B cell (primary cell): ENCODE measurements at regions of chr7 and their contacts with region 1.

Region 1: DNA sequence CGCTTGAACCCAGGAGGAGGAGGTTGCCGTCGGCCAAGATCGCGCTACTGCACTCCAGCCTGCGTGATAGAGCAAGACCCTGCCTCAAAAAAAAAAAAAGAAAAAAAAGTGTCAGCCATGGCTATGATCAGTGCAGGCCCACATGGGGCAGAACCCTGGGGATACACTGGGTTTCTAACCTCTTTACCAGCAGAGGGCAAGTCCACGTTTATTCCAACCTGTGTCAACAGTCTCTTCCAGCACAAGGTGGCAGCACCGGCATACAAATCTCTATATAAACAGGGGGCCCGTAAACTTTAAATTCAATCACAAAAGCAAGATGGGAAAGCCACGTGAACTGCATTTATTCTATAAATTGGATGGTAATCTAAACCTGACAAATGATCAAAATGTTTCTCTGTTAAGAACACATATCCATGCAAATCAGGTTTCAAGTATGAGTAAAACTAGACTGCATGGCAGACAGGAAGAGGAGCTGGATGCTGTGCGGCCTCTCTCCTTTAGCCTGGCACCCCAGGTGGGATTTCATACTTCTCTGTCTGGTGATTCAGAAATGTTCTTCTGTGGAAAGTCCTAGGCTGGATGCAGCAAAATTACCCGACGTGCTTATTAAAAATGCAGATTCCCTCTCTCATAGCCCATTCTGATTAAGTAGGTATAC is 60.0 kb upstream of the STEAP1B start:
- DNase-seq: peak; percentile 88
- ATAC-seq: peak; percentile 90
- H3K4me3 ChIP-seq: no peak overlapping the region
- H3K4me3 Mint-ChIP-seq: peak overlapping the region; percentile 51
- H3K27ac ChIP-seq: no peak overlapping the region
- H3K27ac Mint-ChIP-seq: peak overlapping the region; percentile 26
- H3K4me1 ChIP-seq: peaks cover 39 to 47% of the 10 kb centered on the region in 2 donors
- H3K4me1 Mint-ChIP-seq: peaks cover 41% of the 10 kb centered on the region
- H3K27me3 ChIP-seq: no peaks in the 10 kb centered on the region
- H3K27me3 Mint-ChIP-seq: no peaks in the 10 kb centered on the region
- CTCF ChIP-seq: peak; percentile 95

Region 2: GRCh38 chr7:22433710-22434460 is 126.1 kb before region 1 on chr7:
- CTCF ChIA-PET with region 1: no interaction called
- POLR2A ChIA-PET with region 1: no interaction called
- intact Hi-C with region 1: no loop called
- DNase-seq: no peak
- ATAC-seq: no peak
- H3K4me3 ChIP-seq: no peak overlapping the region
- H3K4me3 Mint-ChIP-seq: no peak overlapping the region
- H3K27ac ChIP-seq: no peak overlapping the region
- H3K27ac Mint-ChIP-seq: peak overlapping the region; percentile 7
- H3K4me1 ChIP-seq: peaks cover 18% of the 10 kb centered on the region in 2 donors
- H3K4me1 Mint-ChIP-seq: peaks cover 27% of the 10 kb centered on the region
- H3K27me3 ChIP-seq: no peaks in the 10 kb centered on the region
- H3K27me3 Mint-ChIP-seq: no peaks in the 10 kb centered on the region
- CTCF ChIP-seq: no peak

Region 3: GRCh38 chr7:22549667-22550513 is 10.1 kb before region 1 on chr7:
- CTCF ChIA-PET with region 1: interaction called, 16 read pairs
- POLR2A ChIA-PET with region 1: no interaction called
- intact Hi-C with region 1: no loop called
- DNase-seq: peak; percentile 78
- ATAC-seq: peak; percentile 62
- H3K4me3 ChIP-seq: peak overlapping the region in 4 of 5 experiments; percentile 31 to 55 (median 50)
- H3K4me3 Mint-ChIP-seq: peak overlapping the region; percentile 96
- H3K27ac ChIP-seq: no peak overlapping the region
- H3K27ac Mint-ChIP-seq: no peak overlapping the region
- H3K4me1 ChIP-seq: peaks cover 29 to 32% of the 10 kb centered on the region in 2 donors
- H3K4me1 Mint-ChIP-seq: peaks cover 32% of the 10 kb centered on the region
- H3K27me3 ChIP-seq: peaks cover 0 to 14% (median 4%) of the 10 kb centered on the region in 4 experiments
- H3K27me3 Mint-ChIP-seq: peaks cover 14% of the 10 kb centered on the region
- CTCF ChIP-seq: peak; percentile 68

Region 4: GRCh38 chr7:22610951-22611757 is 51.2 kb after region 1 on chr7:
- CTCF ChIA-PET with region 1: interaction called, 3 read pairs
- POLR2A ChIA-PET with region 1: no interaction called
- intact Hi-C with region 1: loop called (anchors 10 kb)
- DNase-seq: no peak
- ATAC-seq: no peak
- H3K4me3 ChIP-seq: no peak overlapping the region
- H3K4me3 Mint-ChIP-seq: no peak overlapping the region
- H3K27ac ChIP-seq: no peak overlapping the region
- H3K27ac Mint-ChIP-seq: no peak overlapping the region
- H3K4me1 ChIP-seq: peaks cover 0 to 6% of the 10 kb centered on the region in 2 donors
- H3K4me1 Mint-ChIP-seq: peaks cover 8% of the 10 kb centered on the region
- H3K27me3 ChIP-seq: no peaks in the 10 kb centered on the region
- H3K27me3 Mint-ChIP-seq: no peaks in the 10 kb centered on the region
- CTCF ChIP-seq: no peak

Region 5: GRCh38 chr7:22726345-22727185 is 166.6 kb after region 1 on chr7:
- CTCF ChIA-PET with region 1: interaction called, 712 read pairs
- POLR2A ChIA-PET with region 1: interaction called, 15 read pairs
- intact Hi-C with region 1: loop called (anchors 1 kb)
- DNase-seq: peak; percentile 84
- ATAC-seq: peak; percentile 73
- H3K4me3 ChIP-seq: peak overlapping the region in 4 of 5 experiments; percentile 58 to 70 (median 66)
- H3K4me3 Mint-ChIP-seq: peak overlapping the region; percentile 80
- H3K27ac ChIP-seq: peak overlapping the region; percentile 90 to 94
- H3K27ac Mint-ChIP-seq: peak overlapping the region; percentile 90
- H3K4me1 ChIP-seq: peaks cover 77 to 79% of the 10 kb centered on the region in 2 donors
- H3K4me1 Mint-ChIP-seq: peaks cover 80% of the 10 kb centered on the region
- H3K27me3 ChIP-seq: no peaks in the 10 kb centered on the region
- H3K27me3 Mint-ChIP-seq: no peaks in the 10 kb centered on the region
- CTCF ChIP-seq: peak; percentile 78

Region 6: DNA sequence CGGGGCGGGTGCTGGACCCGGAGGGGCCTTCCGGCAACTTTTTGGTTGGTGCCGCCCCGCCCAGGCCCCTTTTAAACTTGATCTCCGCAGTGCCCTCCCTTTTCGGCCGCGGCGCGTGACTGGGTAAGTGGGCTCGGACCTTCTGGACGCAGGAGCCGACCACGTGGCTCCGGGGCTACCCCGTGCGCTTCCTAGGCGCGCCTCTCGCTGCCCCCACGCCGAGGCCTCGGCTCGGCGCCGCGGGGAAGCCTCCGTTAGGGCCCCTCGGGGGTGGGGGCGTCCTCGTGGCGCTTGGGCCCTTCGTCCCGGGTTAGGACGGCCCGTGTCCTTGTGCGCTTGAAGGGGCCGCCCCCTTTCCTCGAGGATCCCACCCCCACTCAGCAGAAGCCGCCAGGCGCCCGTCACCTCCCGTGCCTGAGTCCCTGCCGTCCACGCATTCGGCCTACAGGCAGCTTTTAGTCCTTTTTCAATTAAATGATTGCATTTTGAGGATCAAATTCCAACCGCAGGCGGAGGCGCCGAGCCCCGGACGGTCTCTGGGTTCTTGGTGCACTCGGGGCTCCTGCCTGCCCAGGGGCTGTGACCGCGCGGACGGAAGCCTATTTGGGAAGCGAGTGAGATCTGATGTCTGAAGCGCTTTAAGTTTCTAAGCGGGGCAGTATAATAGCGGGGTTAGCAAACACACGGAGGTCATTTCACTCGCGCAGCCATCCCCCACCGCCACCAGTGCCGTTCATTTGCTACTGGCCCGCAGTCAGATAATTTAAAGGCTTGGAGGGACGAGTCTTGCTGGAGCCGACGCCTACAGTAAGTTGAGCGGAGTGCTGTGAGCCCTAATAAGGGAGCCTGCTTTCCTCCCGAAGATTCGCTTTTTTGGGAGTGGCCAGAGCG is 294.4 kb after region 1 on chr7:
- CTCF ChIA-PET with region 1: interaction called, 5 read pairs
- POLR2A ChIA-PET with region 1: no interaction called
- intact Hi-C with region 1: loop called (anchors 5 kb)
- DNase-seq: peak; percentile 88
- ATAC-seq: peak; percentile 83
- H3K4me3 ChIP-seq: peak overlapping the region; percentile 74 to 87 (median 80)
- H3K4me3 Mint-ChIP-seq: peak overlapping the region; percentile 97
- H3K27ac ChIP-seq: peak overlapping the region; percentile 71 to 87
- H3K27ac Mint-ChIP-seq: peak overlapping the region; percentile 94
- H3K4me1 ChIP-seq: peaks cover 17 to 27% of the 10 kb centered on the region in 2 donors
- H3K4me1 Mint-ChIP-seq: peaks cover 38% of the 10 kb centered on the region
- H3K27me3 ChIP-seq: no peaks in the 10 kb centered on the region
- H3K27me3 Mint-ChIP-seq: no peaks in the 10 kb centered on the region
- CTCF ChIP-seq: peak; percentile 84

Region 7: GRCh38 chr7:23181684-23182553 is 622.0 kb after region 1 on chr7 and contains the start of gene NUP42:
- CTCF ChIA-PET with region 1: interaction called, 3 read pairs
- POLR2A ChIA-PET with region 1: no interaction called
- intact Hi-C with region 1: loop called (anchors 5 kb)
- DNase-seq: peak; percentile 98
- ATAC-seq: peak; percentile 89
- H3K4me3 ChIP-seq: peak within 1 kb of the TSS; percentile 77 to 99 (median 87)
- H3K4me3 Mint-ChIP-seq: peak within 1 kb of the TSS; percentile 96
- H3K27ac ChIP-seq: peak within 1 kb of the TSS; percentile 92 to 98
- H3K27ac Mint-ChIP-seq: peak within 1 kb of the TSS; percentile 98
- H3K4me1 ChIP-seq: peaks cover 17 to 20% of the 10 kb centered on the region in 2 donors
- H3K4me1 Mint-ChIP-seq: peaks cover 37% of the 10 kb centered on the region
- H3K27me3 ChIP-seq: no peaks in the 10 kb centered on the region
- H3K27me3 Mint-ChIP-seq: no peaks in the 10 kb centered on the region
- CTCF ChIP-seq: no peak
- total RNA-seq, gene NUP42: 49.2 and 58.8 TPM in 2 replicates